ENCODE measurements at regions of chr6 and their contacts with region 1.

Region 1: GRCh38 chr6:80094017-80094416 is 12.5 kb upstream of the BCKDHB start:
- DNase-seq: peak; percentile 69
- H3K4me3 Mint-ChIP-seq: no peak overlapping the region
- H3K27ac Mint-ChIP-seq: no peak overlapping the region
- H3K4me1 Mint-ChIP-seq: peaks cover 7% of the 10 kb centered on the region
- H3K27me3 Mint-ChIP-seq: peaks cover 30% of the 10 kb centered on the region

Region 2: DNA sequence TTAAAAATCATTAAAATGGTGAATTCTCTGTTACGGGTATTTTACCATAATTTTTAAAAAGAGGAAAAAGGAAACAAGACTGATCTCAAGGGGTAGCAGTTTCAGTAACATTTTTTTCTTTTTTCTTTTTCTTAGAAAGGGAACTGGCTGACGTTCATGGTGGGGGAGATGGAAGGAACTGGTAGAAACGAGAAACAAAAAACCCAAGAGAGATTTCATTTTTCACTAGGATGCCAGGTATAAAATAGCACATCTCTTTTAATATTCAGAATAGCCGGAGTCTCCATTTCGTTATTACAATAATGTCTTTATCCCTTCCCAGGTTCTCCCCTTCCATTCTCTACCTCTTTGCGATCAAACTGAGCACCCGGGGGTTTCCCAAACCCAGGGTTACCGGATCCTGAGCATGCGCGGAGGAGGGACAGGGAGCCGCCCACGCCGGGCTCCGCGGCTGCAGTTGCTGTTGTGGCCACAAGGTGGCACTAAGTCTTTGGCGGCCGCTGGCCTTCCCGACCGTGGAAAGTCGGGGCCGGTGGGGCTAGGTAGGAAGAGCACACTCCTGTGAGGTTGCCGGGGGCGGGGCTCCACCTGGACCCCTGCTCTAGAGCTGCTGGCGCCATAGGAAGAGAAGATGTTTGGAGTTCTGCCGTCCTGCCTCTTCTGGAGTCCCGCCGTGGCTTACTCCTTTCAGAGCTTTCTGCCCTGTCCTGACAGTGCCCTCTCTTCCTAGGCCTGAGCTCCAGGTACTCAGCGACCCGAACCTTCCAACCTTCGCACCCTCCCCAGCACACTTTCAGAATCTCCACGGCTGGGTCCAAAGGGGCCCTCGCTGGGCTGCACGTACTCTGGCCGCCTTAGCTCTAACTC is 316.1 kb before region 1 on chr6:
- intact Hi-C with region 1: loop called (anchors 5 kb)
- DNase-seq: peak; percentile 97
- H3K4me3 Mint-ChIP-seq: peak overlapping the region; percentile 79
- H3K27ac Mint-ChIP-seq: peak overlapping the region; percentile 57
- H3K4me1 Mint-ChIP-seq: peaks cover 9% of the 10 kb centered on the region
- H3K27me3 Mint-ChIP-seq: no peaks in the 10 kb centered on the region

Region 3: GRCh38 chr6:79949233-79949632 is 144.8 kb before region 1 on chr6:
- intact Hi-C with region 1: loop called (anchors 1 kb)
- DNase-seq: peak; percentile 89
- H3K4me3 Mint-ChIP-seq: no peak overlapping the region
- H3K27ac Mint-ChIP-seq: no peak overlapping the region
- H3K4me1 Mint-ChIP-seq: peaks cover 18% of the 10 kb centered on the region
- H3K27me3 Mint-ChIP-seq: peaks cover 45% of the 10 kb centered on the region

Region 4: GRCh38 chr6:80133020-80133419 is 39.0 kb after region 1 on chr6:
- intact Hi-C with region 1: no loop called
- DNase-seq: peak; percentile 68
- H3K4me3 Mint-ChIP-seq: no peak overlapping the region
- H3K27ac Mint-ChIP-seq: no peak overlapping the region
- H3K4me1 Mint-ChIP-seq: no peaks in the 10 kb centered on the region
- H3K27me3 Mint-ChIP-seq: no peaks in the 10 kb centered on the region

Region 5: DNA sequence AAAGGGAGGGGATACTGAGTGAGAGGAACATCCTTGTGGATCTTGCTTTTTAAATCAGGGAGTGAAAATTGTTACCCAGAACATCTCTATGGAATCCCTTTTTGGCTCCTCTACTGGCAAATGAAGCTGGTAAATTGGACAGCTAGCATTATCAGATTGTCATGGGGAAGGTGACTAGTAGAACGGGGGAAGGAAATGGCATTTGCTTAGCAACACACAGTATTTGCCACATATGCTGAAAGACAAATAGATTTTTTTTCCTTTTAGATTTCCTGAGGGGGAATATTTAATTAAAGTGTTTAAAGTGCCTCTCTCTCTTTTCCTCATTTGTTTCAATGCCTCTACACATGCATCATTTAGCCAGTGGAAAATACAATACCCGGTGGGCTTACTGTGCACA is 586.0 kb after region 1 on chr6:
- intact Hi-C with region 1: no loop called
- DNase-seq: no peak
- H3K4me3 Mint-ChIP-seq: no peak overlapping the region
- H3K27ac Mint-ChIP-seq: no peak overlapping the region
- H3K4me1 Mint-ChIP-seq: no peaks in the 10 kb centered on the region
- H3K27me3 Mint-ChIP-seq: no peaks in the 10 kb centered on the region